HepG2 (cell line): ENCODE measurements at regions of chr17 and their contacts with region 1.

Region 1: GRCh38 chr17:7403977-7404736 is at the start of gene TMEM256:
- DNase-seq: peak; percentile 98
- ATAC-seq: peak; percentile 95
- H3K4me3 ChIP-seq: peak within 1 kb of the TSS; percentile 76 to 95 (median 80)
- H3K27ac ChIP-seq: peak within 1 kb of the TSS; percentile 99
- H3K4me1 ChIP-seq: peaks cover 18% of the 10 kb centered on the region
- H3K27me3 ChIP-seq: no peaks in the 10 kb centered on the region; a peak in 2 of 5 replicates
- CTCF ChIP-seq: no peak
- EP300 ChIP-seq: peak in 1 of 2 experiments; percentile 34; a peak in 1 of 4 replicates
- POLR2A ChIP-seq: peak; percentile 94
- RAD21 ChIP-seq: no peak; the same call in 1 of the 2 replicates
- total RNA-seq, gene TMEM256: 231 and 246 TPM in 2 replicates

Region 2: DNA sequence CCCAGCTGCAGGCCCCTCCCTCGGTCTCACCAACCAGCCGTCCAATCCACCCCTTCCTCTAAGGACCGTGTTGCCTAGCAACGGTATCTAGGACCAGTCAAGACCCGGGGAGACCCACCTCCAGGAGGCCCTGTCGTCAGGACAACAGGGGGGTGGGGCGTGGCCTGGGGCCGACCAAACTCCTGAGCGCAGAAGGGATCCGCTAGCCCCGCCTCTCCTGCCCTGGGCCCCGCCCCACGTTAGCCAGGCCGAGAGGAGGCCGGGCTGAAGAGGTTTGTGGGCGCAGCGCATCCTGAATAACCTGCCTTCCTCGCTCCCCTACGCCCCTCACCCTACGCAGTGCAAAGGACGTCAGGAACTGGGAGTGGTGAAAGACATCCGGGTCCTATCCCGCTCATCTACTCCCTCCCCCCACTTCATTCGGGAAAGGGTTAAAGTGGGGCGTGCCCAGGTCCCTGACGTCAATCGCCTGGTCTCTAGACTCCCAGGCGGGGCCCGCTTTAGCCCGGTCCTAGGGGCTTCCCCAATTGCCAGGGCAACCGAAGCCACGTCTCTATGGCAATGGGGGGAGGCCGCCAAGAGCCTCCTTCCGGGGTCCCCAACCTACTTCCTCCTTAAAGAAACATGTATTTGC is 199.2 kb before region 1 on chr17:
- CTCF ChIA-PET with region 1: no interaction called
- POLR2A ChIA-PET with region 1: no interaction called
- in situ Hi-C with region 1: no loop called
- intact Hi-C with region 1: no loop called
- DNase-seq: no peak
- ATAC-seq: no peak
- H3K4me3 ChIP-seq: no peak overlapping the region
- H3K27ac ChIP-seq: no peak overlapping the region
- H3K4me1 ChIP-seq: no peaks in the 10 kb centered on the region
- H3K27me3 ChIP-seq: peaks cover 0 to 9% of the 10 kb centered on the region in 2 experiments; a peak in 2 of 5 replicates
- CTCF ChIP-seq: no peak
- EP300 ChIP-seq: no peak
- POLR2A ChIP-seq: no peak
- RAD21 ChIP-seq: no peak

Region 3: DNA sequence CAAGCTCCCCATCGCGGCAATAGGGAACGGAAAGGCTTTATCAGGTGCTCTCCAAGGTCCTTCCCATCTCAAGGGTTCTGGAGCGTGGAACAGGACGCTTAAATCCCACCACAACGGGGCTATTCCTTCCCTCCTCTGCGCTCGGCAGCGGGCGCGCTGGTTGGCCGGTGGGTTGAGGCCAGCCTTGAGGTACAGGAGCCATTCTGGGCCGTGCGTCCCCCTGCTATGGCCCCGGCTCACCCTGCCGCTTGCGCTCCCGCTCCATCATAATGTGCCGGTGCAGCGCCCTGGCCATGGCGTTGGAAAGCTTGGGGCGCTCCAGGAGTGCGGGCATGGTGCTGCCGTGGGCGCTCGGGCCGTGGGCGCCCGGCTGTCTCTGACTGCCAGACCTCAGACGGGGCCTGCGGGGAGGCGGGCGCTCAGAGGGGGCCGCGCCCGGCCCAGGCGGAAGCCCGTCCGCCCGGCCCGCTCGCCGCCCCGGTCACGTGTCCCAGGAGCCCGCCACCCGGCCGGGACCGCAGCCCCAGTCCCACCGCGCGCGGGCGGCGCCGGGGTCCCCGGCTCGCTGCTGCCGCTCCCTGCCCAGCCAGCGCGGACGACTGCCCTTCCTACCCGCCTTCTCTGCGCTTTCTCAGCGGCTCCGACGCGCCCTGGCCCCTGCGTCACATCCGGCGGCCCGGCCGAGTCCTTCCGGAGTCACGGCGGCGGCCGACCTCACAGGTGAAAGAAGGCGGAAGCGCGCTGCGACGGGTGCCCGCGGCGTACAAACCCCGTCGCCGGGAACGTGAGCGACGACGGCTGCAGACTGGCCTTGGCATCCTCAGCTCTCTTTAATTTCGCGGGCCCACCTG is 89.2 kb before region 1 on chr17 and contains the start of gene GPS2:
- CTCF ChIA-PET with region 1: no interaction called
- POLR2A ChIA-PET with region 1: no interaction called
- in situ Hi-C with region 1: no loop called
- intact Hi-C with region 1: no loop called
- DNase-seq: peak; percentile 81
- ATAC-seq: peak; percentile 75
- H3K4me3 ChIP-seq: peak within 1 kb of the TSS; percentile 82 to 89 (median 82)
- H3K27ac ChIP-seq: peak within 1 kb of the TSS; percentile 60
- H3K4me1 ChIP-seq: peaks cover 40% of the 10 kb centered on the region
- H3K27me3 ChIP-seq: no peaks in the 10 kb centered on the region
- CTCF ChIP-seq: peak; percentile 26
- EP300 ChIP-seq: no peak
- POLR2A ChIP-seq: peak; percentile 69 to 93
- RAD21 ChIP-seq: peak; percentile 35; the same call in 1 of the 2 replicates
- total RNA-seq, gene GPS2: 43.8 and 58.0 TPM in 2 replicates

Region 4: DNA sequence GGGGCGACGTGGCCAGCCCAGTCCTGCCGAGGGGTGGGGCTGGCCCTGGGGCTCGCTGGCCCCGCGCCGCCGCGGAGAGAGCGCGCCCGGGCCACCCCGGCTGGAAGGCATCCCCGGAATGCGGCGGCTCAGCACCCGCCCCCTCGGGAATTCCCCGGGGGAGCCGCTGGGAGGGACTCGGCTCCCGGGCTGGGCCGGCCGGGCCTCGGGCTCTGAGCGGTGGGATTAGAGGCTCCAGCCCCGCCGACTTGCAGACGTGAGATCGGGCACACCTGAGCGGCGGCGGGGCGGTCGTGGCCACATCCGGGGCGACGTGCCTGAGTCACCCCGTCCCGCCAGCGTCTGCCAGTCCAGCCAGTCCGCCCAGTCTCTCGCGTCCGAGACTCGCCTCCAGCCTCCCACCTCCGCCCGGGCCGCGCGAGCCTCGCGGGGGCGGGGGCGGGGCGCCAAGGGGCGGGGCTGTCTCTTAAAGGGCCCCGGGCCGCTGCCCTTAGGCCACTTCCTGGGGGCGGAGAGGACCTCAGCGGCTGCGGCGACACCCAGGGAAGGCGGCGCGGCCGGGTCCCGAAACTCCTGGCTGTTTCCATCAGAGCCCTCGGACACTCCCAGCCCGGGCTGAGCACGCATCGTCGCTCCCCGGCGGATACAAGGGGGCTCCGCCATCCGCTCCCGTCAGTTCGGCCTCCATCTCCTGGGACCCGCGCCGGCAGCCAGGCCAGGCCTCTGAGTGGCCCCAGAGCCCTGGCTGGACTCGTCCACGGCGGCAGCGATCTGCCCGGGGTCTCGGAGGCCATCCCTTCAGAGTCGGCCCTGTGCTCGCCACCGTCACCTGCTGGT is 52.3 kb before region 1 on chr17 and contains the start of gene KCTD11:
- CTCF ChIA-PET with region 1: interaction called, 3 read pairs
- POLR2A ChIA-PET with region 1: interaction called, 44 read pairs
- in situ Hi-C with region 1: no loop called
- intact Hi-C with region 1: loop called (anchors 5 kb)
- DNase-seq: peak; percentile 73
- ATAC-seq: peak; percentile 76
- H3K4me3 ChIP-seq: peak within 1 kb of the TSS; percentile 64 to 88 (median 87)
- H3K27ac ChIP-seq: peak within 1 kb of the TSS; percentile 95
- H3K4me1 ChIP-seq: peaks cover 55% of the 10 kb centered on the region
- H3K27me3 ChIP-seq: peaks cover 0 to 5% of the 10 kb centered on the region in 2 experiments; a peak in 2 of 5 replicates
- CTCF ChIP-seq: peak; percentile 66
- EP300 ChIP-seq: no peak
- POLR2A ChIP-seq: peak in 1 of 2 experiments; percentile 84; a peak in 3 of 4 replicates
- RAD21 ChIP-seq: peak; percentile 58; the same call in 1 of the 2 replicates
- total RNA-seq, gene KCTD11: 1.3 and 1.6 TPM in 2 replicates

Region 5: GRCh38 chr17:7419819-7420610 is 15.9 kb after region 1 on chr17 and contains the start of gene SPEM1:
- CTCF ChIA-PET with region 1: no interaction called
- POLR2A ChIA-PET with region 1: interaction called, 11 read pairs
- in situ Hi-C with region 1: no loop called
- intact Hi-C with region 1: no loop called
- DNase-seq: no peak
- ATAC-seq: peak; percentile 13; the same call in 1 of the 3 replicates
- H3K4me3 ChIP-seq: no peak within 1 kb of the TSS
- H3K27ac ChIP-seq: no peak within 1 kb of the TSS
- H3K4me1 ChIP-seq: peaks cover 13% of the 10 kb centered on the region; the same call in 1 of the 2 replicates
- H3K27me3 ChIP-seq: peaks cover 2 to 5% of the 10 kb centered on the region in 2 experiments; a peak in 1 of 5 replicates
- CTCF ChIP-seq: no peak
- EP300 ChIP-seq: no peak
- POLR2A ChIP-seq: no peak
- RAD21 ChIP-seq: no peak
- total RNA-seq, gene SPEM1: not detected in 2 replicates

Region 6: GRCh38 chr17:7466639-7467341 is 62.6 kb after region 1 on chr17:
- CTCF ChIA-PET with region 1: no interaction called
- POLR2A ChIA-PET with region 1: no interaction called
- in situ Hi-C with region 1: no loop called
- intact Hi-C with region 1: no loop called
- DNase-seq: no peak
- ATAC-seq: no peak
- H3K4me3 ChIP-seq: no peak overlapping the region
- H3K27ac ChIP-seq: no peak overlapping the region
- H3K4me1 ChIP-seq: peaks cover 26% of the 10 kb centered on the region
- H3K27me3 ChIP-seq: no peaks in the 10 kb centered on the region
- CTCF ChIP-seq: no peak
- EP300 ChIP-seq: no peak
- POLR2A ChIP-seq: no peak
- RAD21 ChIP-seq: no peak

Region 7: GRCh38 chr17:7478276-7479153 is 74.4 kb after region 1 on chr17:
- CTCF ChIA-PET with region 1: no interaction called
- POLR2A ChIA-PET with region 1: interaction called, 41 read pairs
- in situ Hi-C with region 1: no loop called
- intact Hi-C with region 1: loop called (anchors 5 kb)
- DNase-seq: no peak
- ATAC-seq: peak; percentile 17
- H3K4me3 ChIP-seq: peak overlapping the region; percentile 72 to 86 (median 79)
- H3K27ac ChIP-seq: peak overlapping the region; percentile 75
- H3K4me1 ChIP-seq: peaks cover 83% of the 10 kb centered on the region
- H3K27me3 ChIP-seq: no peaks in the 10 kb centered on the region; a peak in 1 of 5 replicates
- CTCF ChIP-seq: no peak; the same call in 1 of the 2 replicates
- EP300 ChIP-seq: no peak
- POLR2A ChIP-seq: no peak
- RAD21 ChIP-seq: no peak

Region 8: DNA sequence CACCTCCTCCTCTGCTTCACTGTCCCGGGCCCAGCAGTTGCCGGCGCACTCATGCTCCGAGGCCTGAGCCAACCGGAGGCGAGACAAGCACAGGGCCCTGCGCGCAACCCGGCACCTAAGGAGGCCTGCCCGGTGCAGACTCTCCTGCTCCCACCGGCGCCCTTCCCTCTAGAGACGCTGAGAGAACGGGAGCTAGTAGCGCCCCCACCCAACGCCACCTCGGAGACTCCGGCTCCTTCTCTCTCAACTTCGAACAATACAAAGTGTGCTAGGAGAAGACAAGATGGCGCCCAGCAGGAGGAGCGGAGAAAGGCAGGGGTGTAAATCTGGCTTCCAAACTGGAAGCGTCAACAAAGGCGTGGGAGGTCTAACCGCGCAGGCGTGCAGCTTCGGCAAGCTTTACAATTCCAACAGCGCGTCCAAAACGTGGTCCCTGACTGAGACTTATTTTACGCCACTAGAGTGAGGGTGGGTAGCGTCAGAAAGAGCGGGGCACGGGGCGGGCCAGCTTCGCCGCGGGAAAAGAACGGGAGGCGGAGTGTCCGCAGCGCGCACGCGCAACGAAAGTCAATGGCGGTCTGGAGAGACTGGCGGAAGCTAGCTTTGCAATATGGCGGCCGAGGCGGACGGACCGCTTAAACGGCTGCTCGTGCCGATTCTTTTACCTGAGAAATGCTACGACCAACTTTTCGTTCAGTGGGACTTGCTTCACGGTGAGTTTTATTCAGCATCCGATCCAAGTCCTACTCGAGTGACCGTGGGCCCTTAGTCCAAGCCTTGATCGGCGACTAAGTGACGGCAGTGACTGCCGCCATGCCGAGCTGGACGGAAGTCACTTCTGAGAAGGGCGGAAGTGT is 179.3 kb after region 1 on chr17 and contains the start of gene MPDU1:
- CTCF ChIA-PET with region 1: no interaction called
- POLR2A ChIA-PET with region 1: interaction called, 11 read pairs
- in situ Hi-C with region 1: no loop called
- intact Hi-C with region 1: no loop called
- DNase-seq: peak; percentile 81
- ATAC-seq: peak; percentile 22
- H3K4me3 ChIP-seq: peak within 1 kb of the TSS; percentile 73 to 83 (median 77)
- H3K27ac ChIP-seq: peak within 1 kb of the TSS; percentile 96
- H3K4me1 ChIP-seq: peaks cover 55% of the 10 kb centered on the region
- H3K27me3 ChIP-seq: no peaks in the 10 kb centered on the region; a peak in 1 of 5 replicates
- CTCF ChIP-seq: peak; percentile 20; the same call in 1 of the 2 replicates
- EP300 ChIP-seq: 0 out of 4 replicates have a peak, but pooled peaks of 1 of the 2 experiments have one; percentile 18
- POLR2A ChIP-seq: peak; percentile 79 to 98
- RAD21 ChIP-seq: no peak
- total RNA-seq, gene MPDU1: 59.5 and 112 TPM in 2 replicates